ENCODE measurements at regions of chr3 and their contacts with region 1.

Region 1: GRCh38 chr3:36868614-36869436 is 76.0 kb downstream of the TRANK1 start:
- DNase-seq: no peak
- H3K4me3 ChIP-seq: no peak overlapping the region
- CTCF ChIP-seq: peak; percentile 72

Region 2: DNA sequence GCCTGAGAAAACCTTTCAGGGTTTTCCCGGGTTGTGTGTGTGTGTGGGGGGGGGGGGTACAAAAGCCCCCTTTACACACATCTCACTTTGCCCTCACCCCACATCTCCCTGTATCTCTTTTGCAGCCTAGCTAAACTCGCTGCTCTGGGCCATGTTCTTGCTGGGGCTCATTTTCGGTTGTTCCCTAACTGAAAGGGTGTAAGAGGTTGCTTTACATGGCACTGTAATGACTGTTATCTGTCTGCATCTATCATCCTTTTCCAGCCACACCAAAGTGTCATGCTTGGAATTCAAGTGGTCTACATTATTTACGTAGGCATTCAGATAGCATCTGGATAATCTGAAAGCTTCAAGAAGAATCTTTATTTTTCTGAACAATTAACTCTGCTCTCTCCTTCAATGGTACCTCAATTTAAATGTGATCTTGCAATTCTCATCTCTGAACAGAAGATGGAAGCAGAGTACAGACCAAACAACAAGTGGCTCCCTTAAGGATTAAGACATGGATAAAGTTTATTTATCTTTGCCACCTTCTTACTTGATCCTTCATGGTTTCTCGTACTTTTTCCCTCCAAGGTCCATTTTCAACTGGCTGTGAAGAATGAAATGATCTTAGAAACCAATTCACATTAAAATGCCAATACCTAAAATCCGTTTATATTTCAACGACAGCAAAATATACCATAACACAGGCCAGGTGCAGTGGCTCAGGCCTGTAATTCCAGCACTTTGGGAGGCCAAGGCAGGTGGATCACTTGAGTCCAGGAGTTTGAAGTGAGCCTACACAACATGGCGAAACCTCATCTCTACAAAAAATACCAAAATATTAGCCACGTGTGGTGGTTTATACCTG is 139.4 kb before region 1 on chr3:
- CTCF ChIA-PET with region 1: interaction called, 81 read pairs
- POLR2A ChIA-PET with region 1: no interaction called
- DNase-seq: peak; percentile 28
- H3K4me3 ChIP-seq: no peak overlapping the region
- CTCF ChIP-seq: peak; percentile 48

Region 3: DNA sequence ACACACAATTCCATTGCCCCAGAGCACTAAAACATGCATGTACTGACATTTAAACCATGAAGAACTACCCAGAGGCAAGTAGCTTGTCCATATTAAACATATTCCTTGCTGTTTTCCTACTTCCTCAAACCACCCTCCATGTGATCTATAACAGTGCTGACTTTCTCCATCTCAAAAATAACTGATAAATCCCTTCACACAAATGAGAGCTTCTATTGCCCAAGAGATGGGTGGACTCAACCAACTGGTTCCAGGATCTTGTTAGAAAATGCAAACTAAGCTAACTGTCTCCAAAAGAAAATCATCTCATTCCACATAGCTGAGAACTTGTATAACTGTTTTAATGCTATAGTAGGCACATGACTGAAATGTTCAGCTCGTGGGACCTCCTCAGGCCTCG is 134.1 kb before region 1 on chr3:
- CTCF ChIA-PET with region 1: interaction called, 81 read pairs
- POLR2A ChIA-PET with region 1: no interaction called
- DNase-seq: no peak
- H3K4me3 ChIP-seq: no peak overlapping the region
- CTCF ChIP-seq: no peak

Region 4: GRCh38 chr3:36792342-36792741 is 76.5 kb before region 1 on chr3:
- CTCF ChIA-PET with region 1: interaction called, 15 read pairs
- POLR2A ChIA-PET with region 1: no interaction called
- DNase-seq: no peak
- H3K4me3 ChIP-seq: no peak overlapping the region
- CTCF ChIP-seq: peak; percentile 57

Region 5: DNA sequence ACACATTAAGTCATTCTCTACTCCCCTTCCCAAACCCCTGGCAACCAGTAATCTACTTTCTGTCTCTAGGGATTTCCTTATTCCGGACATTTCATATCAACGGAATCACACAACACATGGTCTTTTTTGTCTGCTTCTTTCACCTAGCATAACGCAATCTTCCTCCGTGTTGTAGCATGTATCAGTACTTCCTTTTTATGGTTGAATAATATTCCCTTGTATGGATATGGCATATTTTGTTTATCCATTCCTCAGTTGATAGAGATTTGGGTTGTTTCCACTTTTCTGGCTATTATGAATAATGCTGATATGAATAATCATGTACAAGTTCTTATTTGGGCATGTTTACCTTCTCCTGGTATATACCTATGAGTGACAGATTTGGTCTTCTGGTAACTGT is 12.9 kb after region 1 on chr3:
- CTCF ChIA-PET with region 1: interaction called, 27 read pairs
- POLR2A ChIA-PET with region 1: no interaction called
- DNase-seq: no peak
- H3K4me3 ChIP-seq: no peak overlapping the region
- CTCF ChIP-seq: no peak

Region 6: GRCh38 chr3:36893137-36893557 is 24.3 kb after region 1 on chr3:
- CTCF ChIA-PET with region 1: interaction called, 27 read pairs
- POLR2A ChIA-PET with region 1: no interaction called
- DNase-seq: no peak
- H3K4me3 ChIP-seq: no peak overlapping the region
- CTCF ChIP-seq: no peak

Region 7: GRCh38 chr3:37308247-37308646 is 439.4 kb after region 1 on chr3:
- CTCF ChIA-PET with region 1: no interaction called
- POLR2A ChIA-PET with region 1: no interaction called
- DNase-seq: no peak
- H3K4me3 ChIP-seq: no peak overlapping the region
- CTCF ChIP-seq: no peak